ENCODE measurements at regions of chr1 and their contacts with region 1.

Region 1: GRCh38 chr1:46254668-46255067 is 7.1 kb downstream of the RAD54L start:
- DNase-seq: no peak
- ATAC-seq: no peak
- H3K4me3 ChIP-seq: no peak overlapping the region
- H3K4me3 Mint-ChIP-seq: no peak overlapping the region
- H3K27ac ChIP-seq: no peak overlapping the region
- H3K27ac Mint-ChIP-seq: no peak overlapping the region
- H3K4me1 ChIP-seq: no peaks in the 10 kb centered on the region
- H3K4me1 Mint-ChIP-seq: no peaks in the 10 kb centered on the region
- H3K27me3 ChIP-seq: no peaks in the 10 kb centered on the region
- H3K27me3 Mint-ChIP-seq: no peaks in the 10 kb centered on the region

Region 2: DNA sequence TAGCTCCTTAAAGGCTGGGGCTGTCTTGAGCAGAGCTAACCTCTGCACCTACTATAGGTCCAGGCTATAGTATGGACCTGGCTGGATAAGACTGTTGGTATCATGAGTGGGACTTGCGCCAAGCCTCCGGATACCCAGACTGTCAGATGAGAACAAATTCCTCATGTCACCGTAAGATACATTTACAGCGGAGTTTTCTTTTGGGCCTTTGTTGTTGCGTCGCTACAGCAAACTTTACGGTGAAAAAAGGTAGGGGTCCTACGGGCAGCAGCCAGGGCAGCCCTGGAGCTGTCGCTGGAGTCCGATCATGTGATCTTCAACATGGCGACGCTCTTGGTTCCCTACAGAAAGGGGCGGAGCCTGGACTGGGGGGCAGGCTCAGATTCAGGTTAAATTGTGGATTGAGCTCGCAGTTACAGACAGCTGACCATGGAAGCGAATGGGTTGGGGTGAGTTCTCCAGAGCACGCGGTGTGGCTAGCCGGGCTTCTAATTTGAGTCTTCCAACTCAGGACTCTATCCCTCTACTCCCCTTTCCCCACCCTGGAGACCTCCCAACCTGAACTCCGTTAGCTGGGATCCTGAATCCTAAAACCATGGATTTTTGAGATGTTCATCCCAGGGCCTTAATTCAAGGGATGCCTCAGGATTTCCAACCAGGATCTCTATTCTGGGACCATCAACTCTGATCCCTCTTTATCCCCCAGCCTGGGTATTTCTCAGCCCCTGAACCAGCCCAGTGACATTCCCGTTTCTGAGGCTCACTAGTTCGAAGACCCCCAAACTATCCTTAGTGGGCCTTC is 1242.6 kb before region 1 on chr1 and contains the start of gene UROD:
- CTCF ChIA-PET with region 1: no interaction called
- POLR2A ChIA-PET with region 1: interaction called in 1 of 2 experiments, 10 read pairs
- DNase-seq: peak; percentile 69 to 95 (median 89)
- ATAC-seq: peak; percentile 79 to 86 (median 80)
- H3K4me3 ChIP-seq: peak within 1 kb of the TSS; percentile 71 to 90
- H3K4me3 Mint-ChIP-seq: peak within 1 kb of the TSS; percentile 82 to 94 (median 90)
- H3K27ac ChIP-seq: peak within 1 kb of the TSS; percentile 81
- H3K27ac Mint-ChIP-seq: peak within 1 kb of the TSS; percentile 88 to 91
- H3K4me1 ChIP-seq: peaks cover 21 to 54% of the 10 kb centered on the region in 2 experiments
- H3K4me1 Mint-ChIP-seq: peaks cover 51 to 59% (median 55%) of the 10 kb centered on the region in 3 donors
- H3K27me3 ChIP-seq: no peaks in the 10 kb centered on the region
- H3K27me3 Mint-ChIP-seq: no peaks in the 10 kb centered on the region
- total RNA-seq, gene UROD: 52.0 to 58.6 (median 57.3) TPM

Region 3: GRCh38 chr1:46223472-46223943 is 31.2 kb before region 1 on chr1:
- CTCF ChIA-PET with region 1: interaction called in 1 of 2 experiments, 5 read pairs
- POLR2A ChIA-PET with region 1: interaction called in 1 of 2 experiments, 10 read pairs
- DNase-seq: peak in 34 of 35 experiments; percentile 6 to 80 (median 45)
- ATAC-seq: peak; percentile 80 to 95 (median 92)
- H3K4me3 ChIP-seq: no peak overlapping the region
- H3K4me3 Mint-ChIP-seq: no peak overlapping the region
- H3K27ac ChIP-seq: no peak overlapping the region
- H3K27ac Mint-ChIP-seq: no peak overlapping the region
- H3K4me1 ChIP-seq: peaks cover 0 to 3% of the 10 kb centered on the region in 2 experiments
- H3K4me1 Mint-ChIP-seq: peaks cover 2 to 5% (median 3%) of the 10 kb centered on the region in 3 donors
- H3K27me3 ChIP-seq: peaks cover 0 to 7% of the 10 kb centered on the region in 2 experiments
- H3K27me3 Mint-ChIP-seq: no peaks in the 10 kb centered on the region